Endothelial cell of umbilical vein (primary cell): ENCODE measurements at regions of chr10 and their contacts with region 1.

Region 1: DNA sequence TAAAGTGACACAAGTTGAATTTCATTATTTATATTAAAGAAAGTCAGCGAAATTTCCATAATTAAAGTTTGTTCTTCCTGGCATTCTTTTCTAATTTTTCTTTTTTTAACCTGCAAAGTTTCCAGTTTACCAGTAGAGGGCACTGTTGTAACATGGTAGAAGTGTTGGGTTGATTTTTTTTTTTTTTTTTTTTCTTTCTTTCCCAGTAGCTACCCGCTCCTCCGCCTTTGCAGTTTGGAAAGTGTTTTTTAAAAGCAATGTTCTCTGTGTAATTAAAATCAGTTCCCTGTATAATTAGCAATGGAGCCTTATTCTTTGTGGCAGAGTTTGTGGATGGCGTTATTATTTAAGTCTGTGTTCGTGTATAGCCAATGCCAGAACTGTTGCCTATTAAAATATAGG is 53.7 kb downstream of the TAF3 start:
- DNase-seq: peak; percentile 68
- H3K4me3 ChIP-seq: peak overlapping the region; percentile 26 to 78 (median 32)
- H3K27ac ChIP-seq: no peak overlapping the region
- H3K4me1 ChIP-seq: peaks cover 13% of the 10 kb centered on the region
- H3K27me3 ChIP-seq: no peaks in the 10 kb centered on the region
- CTCF ChIP-seq: peak; percentile 43 to 46
- POLR2A ChIP-seq: no peak

Region 2: DNA sequence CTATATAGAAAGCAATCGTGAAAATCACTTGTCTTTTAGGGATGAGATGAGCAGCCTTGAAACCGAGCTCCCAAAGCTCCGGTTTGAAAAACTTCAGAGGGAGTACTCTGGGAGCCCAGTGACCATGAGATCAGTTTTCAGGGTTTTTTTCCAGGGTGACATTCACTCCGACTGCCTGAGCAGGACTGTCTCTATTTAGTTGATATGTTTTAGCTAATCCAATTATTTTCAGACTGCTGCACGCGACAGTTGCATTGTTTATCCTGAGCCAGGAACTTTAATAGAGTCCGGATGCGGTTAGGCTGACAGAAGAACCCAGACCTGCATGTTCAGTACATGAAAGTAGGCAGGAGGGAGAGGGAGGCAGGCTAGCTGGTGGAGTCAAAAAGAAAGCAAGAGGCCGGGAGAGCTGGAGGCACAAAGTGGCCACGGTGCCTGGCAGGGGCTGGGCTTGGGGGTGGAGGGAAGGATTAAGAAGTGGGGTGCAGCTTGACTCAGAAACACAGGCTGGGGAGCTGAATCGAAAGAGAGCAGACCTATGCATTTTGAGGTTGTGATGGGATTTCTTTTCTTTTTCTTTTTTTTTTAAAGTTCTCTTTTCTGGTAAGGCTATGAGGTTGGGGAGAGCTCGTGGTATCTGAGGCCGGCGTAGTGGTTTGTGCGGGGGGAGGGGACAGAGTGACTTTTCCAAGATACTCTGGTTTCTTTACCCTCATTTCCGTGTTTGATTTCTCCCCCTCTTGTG is 188.1 kb after region 1 on chr10:
- CTCF ChIA-PET with region 1: interaction called, 10 read pairs
- POLR2A ChIA-PET with region 1: no interaction called
- dilution Hi-C with region 1: no loop called
- intact Hi-C with region 1: no loop called
- DNase-seq: peak; percentile 78
- H3K4me3 ChIP-seq: peak overlapping the region; percentile 4 to 95 (median 50)
- H3K27ac ChIP-seq: peak overlapping the region; percentile 79
- H3K4me1 ChIP-seq: peaks cover 75% of the 10 kb centered on the region
- H3K27me3 ChIP-seq: no peaks in the 10 kb centered on the region
- CTCF ChIP-seq: no peak
- POLR2A ChIP-seq: peak; percentile 9

Region 3: DNA sequence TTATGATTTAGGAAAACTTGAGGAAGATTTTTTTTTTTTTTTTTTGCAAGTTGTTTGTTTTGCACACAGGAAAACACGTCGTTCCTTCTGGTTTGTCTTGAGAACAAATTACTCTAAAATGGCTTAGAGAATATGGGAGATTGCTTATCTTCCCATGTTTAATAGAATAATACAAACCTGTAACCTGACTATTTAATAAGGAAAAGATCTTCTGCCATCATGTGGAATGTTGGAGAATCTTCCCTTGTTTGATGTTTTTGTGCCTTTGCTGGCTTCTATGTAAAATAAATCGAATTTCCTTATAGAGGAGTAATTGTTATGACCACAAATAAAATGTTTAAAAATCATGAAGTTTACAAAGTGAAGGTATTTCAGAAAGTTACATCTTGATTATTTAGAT is 1001.3 kb after region 1 on chr10:
- CTCF ChIA-PET with region 1: interaction called, 4 read pairs
- POLR2A ChIA-PET with region 1: no interaction called
- dilution Hi-C with region 1: no loop called
- intact Hi-C with region 1: loop called (anchors 2 kb)
- DNase-seq: peak; percentile 22
- H3K4me3 ChIP-seq: no peak overlapping the region
- H3K27ac ChIP-seq: no peak overlapping the region
- H3K4me1 ChIP-seq: no peaks in the 10 kb centered on the region
- H3K27me3 ChIP-seq: no peaks in the 10 kb centered on the region
- CTCF ChIP-seq: no peak
- POLR2A ChIP-seq: no peak

Region 4: GRCh38 chr10:9075422-9075821 is 1203.4 kb after region 1 on chr10:
- CTCF ChIA-PET with region 1: interaction called, 5 read pairs
- POLR2A ChIA-PET with region 1: no interaction called
- dilution Hi-C with region 1: no loop called
- intact Hi-C with region 1: loop called (anchors 1 kb)
- DNase-seq: peak; percentile 28
- H3K4me3 ChIP-seq: no peak overlapping the region
- H3K27ac ChIP-seq: no peak overlapping the region
- H3K4me1 ChIP-seq: no peaks in the 10 kb centered on the region
- H3K27me3 ChIP-seq: no peaks in the 10 kb centered on the region
- CTCF ChIP-seq: no peak
- POLR2A ChIP-seq: no peak